Calu3 (cell line): ENCODE measurements at regions of chr5 and their contacts with region 1.

Region 1: DNA sequence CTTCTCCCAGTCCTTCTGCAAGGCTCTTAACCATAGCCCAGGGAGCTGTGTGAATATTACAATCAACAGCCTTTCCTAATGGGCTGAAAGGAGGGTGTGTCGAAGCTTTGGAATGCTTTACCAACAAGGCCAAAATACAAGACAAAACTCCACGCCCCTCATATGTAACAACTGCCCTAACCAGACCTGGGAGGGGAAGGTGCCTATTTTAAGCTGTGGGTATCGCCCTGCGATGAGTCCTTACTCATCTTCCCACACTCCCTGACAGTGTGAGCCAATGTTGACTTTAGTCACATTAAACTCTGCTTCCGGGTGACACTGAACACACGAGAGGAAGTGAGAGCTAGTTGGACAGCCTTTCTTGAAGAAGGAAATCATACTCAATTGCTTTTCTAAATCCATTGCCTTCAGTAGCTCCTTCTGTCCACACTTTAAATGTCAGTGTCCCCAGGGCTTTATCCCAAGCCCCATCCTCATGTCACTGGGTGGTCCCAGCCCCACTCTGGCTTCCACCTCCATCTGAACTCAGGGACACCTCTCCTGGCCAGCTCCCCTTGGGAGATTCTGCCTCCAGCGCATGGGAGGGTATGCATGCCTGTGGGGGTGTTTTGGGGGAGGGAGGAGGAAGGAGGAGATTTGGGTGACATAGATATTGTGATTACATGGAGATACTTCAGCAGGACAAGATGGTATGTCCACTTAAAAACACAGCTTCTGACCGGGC is 6.5 kb upstream of the TBC1D9B start:
- DNase-seq: peak; percentile 43
- H3K4me3 Mint-ChIP-seq: no peak overlapping the region
- H3K27ac Mint-ChIP-seq: peak overlapping the region; percentile 58
- H3K4me1 Mint-ChIP-seq: peaks cover 11% of the 10 kb centered on the region
- H3K27me3 Mint-ChIP-seq: peaks cover 31% of the 10 kb centered on the region
- CTCF ChIP-seq: no peak

Region 2: DNA sequence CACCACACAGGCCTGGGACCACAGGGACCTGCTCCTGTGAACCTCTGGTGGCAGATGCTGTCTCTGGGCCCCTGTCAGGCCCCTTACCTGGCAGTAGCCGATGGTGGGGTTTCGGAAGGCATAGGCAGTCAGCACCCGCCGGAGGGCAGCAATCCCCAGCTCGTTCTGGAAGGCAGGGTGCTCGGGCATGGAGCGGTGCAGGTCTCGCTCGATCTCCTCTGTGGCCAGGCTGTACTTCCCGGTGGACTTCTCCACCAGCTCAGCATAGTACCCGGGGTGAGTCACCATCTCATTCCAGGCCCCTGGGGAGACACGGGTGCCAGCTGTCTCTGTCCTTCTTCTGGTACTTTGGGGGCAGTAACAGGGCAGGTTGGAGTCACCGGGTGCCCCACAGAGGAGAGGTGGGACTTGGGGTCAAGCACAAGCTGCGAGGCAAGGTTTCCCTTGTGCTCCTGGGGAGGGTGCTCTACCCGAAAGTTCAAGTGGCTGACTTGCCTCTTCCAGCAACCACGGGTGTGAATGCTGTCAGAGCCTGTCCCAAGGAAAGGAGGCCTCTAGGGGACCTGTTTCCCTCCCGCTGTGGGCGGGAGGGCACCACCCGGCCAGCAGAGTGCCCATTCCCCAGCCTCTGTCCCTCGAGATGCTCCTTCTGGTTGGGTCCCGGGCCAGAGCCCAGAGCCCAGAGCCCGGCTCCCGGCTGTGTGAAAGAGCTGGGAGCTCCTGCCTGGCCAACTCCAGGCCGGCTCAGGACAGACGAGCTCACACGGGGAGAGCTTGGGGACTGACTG is 35.8 kb before region 1 on chr5:
- CTCF ChIA-PET with region 1: no interaction called
- intact Hi-C with region 1: no loop called
- DNase-seq: no peak
- H3K4me3 Mint-ChIP-seq: no peak overlapping the region
- H3K27ac Mint-ChIP-seq: no peak overlapping the region
- H3K4me1 Mint-ChIP-seq: no peaks in the 10 kb centered on the region
- H3K27me3 Mint-ChIP-seq: no peaks in the 10 kb centered on the region
- CTCF ChIP-seq: no peak

Region 3: GRCh38 chr5:180084688-180085561 is 170.7 kb after region 1 on chr5:
- CTCF ChIA-PET with region 1: no interaction called
- intact Hi-C with region 1: loop called (anchors 10 kb)
- DNase-seq: peak; percentile 86
- H3K4me3 Mint-ChIP-seq: peak overlapping the region; percentile 24
- H3K27ac Mint-ChIP-seq: no peak overlapping the region
- H3K4me1 Mint-ChIP-seq: peaks cover 18% of the 10 kb centered on the region
- H3K27me3 Mint-ChIP-seq: peaks cover 35% of the 10 kb centered on the region
- CTCF ChIP-seq: no peak